ENCODE measurements at regions of chr10 and their contacts with region 1.

Region 1: GRCh38 chr10:14195433-14195832 is 135.3 kb downstream of the FRMD4A start:
- DNase-seq: no peak
- ATAC-seq: no peak
- H3K4me3 ChIP-seq: no peak overlapping the region
- H3K27ac ChIP-seq: no peak overlapping the region
- H3K4me1 ChIP-seq: no peaks in the 10 kb centered on the region
- H3K27me3 ChIP-seq: no peaks in the 10 kb centered on the region

Region 2: DNA sequence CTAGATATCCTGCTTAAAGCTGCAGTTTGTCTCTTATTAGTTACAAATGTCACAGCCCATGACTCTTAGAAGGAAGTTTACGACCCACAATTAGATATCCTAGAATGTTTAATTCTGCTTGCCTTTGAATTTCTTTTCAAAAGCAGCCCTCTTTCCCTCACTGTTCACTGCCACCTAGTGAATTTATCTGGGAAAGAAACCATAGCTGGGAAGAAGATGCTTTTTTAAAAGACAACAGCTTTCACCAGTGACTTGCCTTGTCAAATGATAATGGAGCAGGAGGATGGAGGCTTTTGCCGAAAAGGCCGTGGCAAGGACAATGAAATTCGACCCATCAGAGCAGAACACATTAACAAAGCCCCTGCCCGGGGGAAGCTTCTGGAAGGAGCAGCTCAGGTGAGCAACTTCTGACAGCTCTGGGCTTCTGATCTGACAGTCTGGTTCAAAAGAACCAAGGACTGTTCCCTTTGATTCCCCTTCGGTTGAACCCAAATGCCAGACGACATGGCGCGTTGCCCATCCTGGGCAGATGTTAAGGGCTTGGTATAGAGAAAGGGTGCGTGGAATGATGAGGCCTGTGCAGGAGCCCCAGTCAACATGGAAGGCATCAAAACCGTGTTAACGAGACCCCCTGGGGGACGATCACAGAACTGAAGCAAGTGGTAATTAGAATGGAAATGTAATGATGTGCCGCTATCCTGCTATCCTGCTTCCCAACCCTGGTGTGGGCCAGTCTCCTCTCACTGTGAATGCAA is 101.5 kb before region 1 on chr10:
- intact Hi-C with region 1: no loop called
- DNase-seq: no peak
- ATAC-seq: no peak
- H3K4me3 ChIP-seq: no peak overlapping the region
- H3K27ac ChIP-seq: no peak overlapping the region
- H3K4me1 ChIP-seq: no peaks in the 10 kb centered on the region
- H3K27me3 ChIP-seq: no peaks in the 10 kb centered on the region

Region 3: GRCh38 chr10:14118953-14119352 is 76.5 kb before region 1 on chr10:
- intact Hi-C with region 1: no loop called
- DNase-seq: no peak
- ATAC-seq: no peak
- H3K4me3 ChIP-seq: no peak overlapping the region
- H3K27ac ChIP-seq: no peak overlapping the region
- H3K4me1 ChIP-seq: no peaks in the 10 kb centered on the region
- H3K27me3 ChIP-seq: no peaks in the 10 kb centered on the region

Region 4: GRCh38 chr10:14325325-14325955 is 130.0 kb after region 1 on chr10:
- intact Hi-C with region 1: loop called in 1 of 2 experiments (anchors 5 kb)
- DNase-seq: peak; percentile 55 to 80
- ATAC-seq: no peak
- H3K4me3 ChIP-seq: no peak overlapping the region
- H3K27ac ChIP-seq: no peak overlapping the region
- H3K4me1 ChIP-seq: no peaks in the 10 kb centered on the region
- H3K27me3 ChIP-seq: no peaks in the 10 kb centered on the region

Region 5: GRCh38 chr10:14340051-14340744 is 144.8 kb after region 1 on chr10:
- intact Hi-C with region 1: no loop called
- DNase-seq: no peak
- ATAC-seq: no peak
- H3K4me3 ChIP-seq: no peak overlapping the region
- H3K27ac ChIP-seq: no peak overlapping the region
- H3K4me1 ChIP-seq: no peaks in the 10 kb centered on the region
- H3K27me3 ChIP-seq: no peaks in the 10 kb centered on the region

Measured in aorta (tissue), 5 donors.